Right ventricle myocardium inferior (tissue), 1 donor: ENCODE measurements at regions of chr20 and their contacts with region 1.

Region 1: GRCh38 chr20:699811-700338 is 24.3 kb upstream of the SCRT2 start:
- DNase-seq: peak; percentile 85
- ATAC-seq: peak; percentile 95

Region 2: GRCh38 chr20:539848-540247 is 160.0 kb before region 1 on chr20:
- intact Hi-C with region 1: no loop called
- DNase-seq: no peak
- ATAC-seq: no peak

Region 3: DNA sequence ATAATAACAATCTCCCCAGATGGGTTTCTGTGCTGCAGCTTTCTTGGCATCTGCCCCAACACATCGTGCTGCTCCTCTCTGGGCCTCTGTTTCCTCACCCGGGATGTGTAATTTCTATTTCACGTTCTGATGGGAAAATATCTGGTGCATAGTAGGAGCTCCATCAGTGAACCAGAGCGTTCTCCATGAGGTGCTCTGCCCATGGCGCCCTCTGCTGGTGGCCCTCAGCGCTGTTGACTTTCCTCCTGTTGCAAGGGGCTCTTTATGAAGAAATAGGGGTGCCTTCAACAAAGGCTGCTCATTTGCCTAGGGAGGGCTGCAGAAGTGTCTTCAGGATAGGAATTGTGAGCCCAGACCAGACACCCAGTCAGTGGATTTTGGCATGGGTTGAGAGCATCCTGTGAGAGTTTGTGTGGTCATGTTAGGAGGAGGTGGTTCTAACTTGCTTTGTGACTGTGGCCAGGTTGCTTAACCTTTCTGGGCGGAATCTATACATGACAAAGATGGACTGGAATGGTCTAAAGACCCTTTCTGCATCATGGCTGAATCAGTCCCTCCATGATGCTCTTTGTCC is 32.4 kb before region 1 on chr20:
- intact Hi-C with region 1: loop called (anchors 5 kb)
- DNase-seq: peak; percentile 82
- ATAC-seq: no peak